ENCODE measurements at regions of chr3 and their contacts with region 1.

Region 1: GRCh38 chr3:108505811-108506210 is 4.6 kb downstream of the MYH15 start:
- DNase-seq: no peak
- ATAC-seq: peak; percentile 16; the same call in 1 of the 2 replicates
- H3K4me3 ChIP-seq: no peak overlapping the region
- H3K27ac ChIP-seq: no peak overlapping the region
- H3K4me1 ChIP-seq: no peaks in the 10 kb centered on the region
- H3K27me3 ChIP-seq: no peaks in the 10 kb centered on the region
- CTCF ChIP-seq: no peak

Region 2: DNA sequence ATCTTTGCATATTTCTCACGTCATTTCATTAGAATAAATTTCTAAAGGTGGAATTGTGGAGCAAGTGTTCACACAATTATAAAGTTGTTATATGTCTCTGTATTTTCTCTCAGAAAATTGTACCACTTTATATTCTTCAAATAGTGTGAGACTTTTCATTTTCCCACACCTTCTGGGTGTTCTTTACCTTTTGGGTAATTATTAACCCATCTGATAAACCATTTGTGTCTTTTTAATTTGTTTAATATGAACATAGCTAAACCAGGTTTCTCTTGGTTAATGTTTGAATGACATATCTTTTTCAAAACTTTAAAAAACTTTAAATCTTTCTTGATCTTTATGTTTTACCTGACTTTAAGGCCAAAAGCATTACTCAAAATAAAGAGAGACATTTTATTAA is 124.2 kb after region 1 on chr3:
- CTCF ChIA-PET with region 1: no interaction called
- POLR2A ChIA-PET with region 1: interaction called, 10 read pairs
- intact Hi-C with region 1: no loop called
- DNase-seq: no peak
- ATAC-seq: no peak
- H3K4me3 ChIP-seq: no peak overlapping the region
- H3K27ac ChIP-seq: no peak overlapping the region
- H3K4me1 ChIP-seq: no peaks in the 10 kb centered on the region
- H3K27me3 ChIP-seq: no peaks in the 10 kb centered on the region
- CTCF ChIP-seq: no peak